ENCODE measurements at regions of chr11 and their contacts with region 1.

Region 1: GRCh38 chr11:57324886-57325734 is at the start of gene TNKS1BP1:
- DNase-seq: peak; percentile 86
- H3K4me3 Mint-ChIP-seq: peak within 1 kb of the TSS; percentile 85
- H3K27ac Mint-ChIP-seq: peak within 1 kb of the TSS; percentile 91
- H3K4me1 Mint-ChIP-seq: peaks cover 57% of the 10 kb centered on the region
- H3K27me3 Mint-ChIP-seq: no peaks in the 10 kb centered on the region
- total RNA-seq, gene TNKS1BP1: 22.1 and 24.3 TPM in 2 replicates

Region 2: GRCh38 chr11:56331861-56332491 is 993.1 kb before region 1 on chr11:
- intact Hi-C with region 1: no loop called
- DNase-seq: no peak
- H3K4me3 Mint-ChIP-seq: no peak overlapping the region
- H3K27ac Mint-ChIP-seq: no peak overlapping the region
- H3K4me1 Mint-ChIP-seq: no peaks in the 10 kb centered on the region
- H3K27me3 Mint-ChIP-seq: no peaks in the 10 kb centered on the region

Region 3: DNA sequence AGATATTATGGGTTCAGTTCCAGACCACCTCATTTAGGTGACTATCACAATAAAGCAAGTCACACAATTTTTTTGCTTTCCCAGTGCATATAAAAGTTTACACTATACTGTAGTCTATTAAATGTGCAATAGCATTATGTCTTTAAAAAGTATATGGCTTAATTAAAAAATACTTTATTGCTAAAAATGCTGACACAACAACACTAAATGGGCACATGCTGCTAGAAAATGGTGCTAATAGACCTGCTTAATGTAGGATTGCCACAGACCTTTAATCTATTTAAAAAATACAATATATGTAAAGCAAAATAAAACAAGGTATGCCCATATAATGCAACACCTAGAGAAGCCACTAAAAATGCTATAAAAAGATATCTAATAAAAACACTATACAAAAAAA is 363.5 kb before region 1 on chr11:
- intact Hi-C with region 1: no loop called
- DNase-seq: no peak
- H3K4me3 Mint-ChIP-seq: no peak overlapping the region
- H3K27ac Mint-ChIP-seq: no peak overlapping the region
- H3K4me1 Mint-ChIP-seq: no peaks in the 10 kb centered on the region
- H3K27me3 Mint-ChIP-seq: no peaks in the 10 kb centered on the region

Region 4: GRCh38 chr11:57311109-57311936 is 13.8 kb before region 1 on chr11:
- intact Hi-C with region 1: loop called (anchors 1 kb)
- DNase-seq: peak; percentile 47
- H3K4me3 Mint-ChIP-seq: peak overlapping the region; percentile 65
- H3K27ac Mint-ChIP-seq: peak overlapping the region; percentile 43
- H3K4me1 Mint-ChIP-seq: peaks cover 5% of the 10 kb centered on the region
- H3K27me3 Mint-ChIP-seq: peaks cover 2% of the 10 kb centered on the region

Region 5: GRCh38 chr11:57335343-57336110 is 10.4 kb after region 1 on chr11 and contains the start of gene SSRP1:
- intact Hi-C with region 1: loop called (anchors 1 kb)
- DNase-seq: peak; percentile 81
- H3K4me3 Mint-ChIP-seq: peak within 1 kb of the TSS; percentile 92
- H3K27ac Mint-ChIP-seq: peak within 1 kb of the TSS; percentile 99
- H3K4me1 Mint-ChIP-seq: peaks cover 39% of the 10 kb centered on the region
- H3K27me3 Mint-ChIP-seq: peaks cover 1% of the 10 kb centered on the region
- total RNA-seq, gene SSRP1: 235 and 239 TPM in 2 replicates

Region 6: DNA sequence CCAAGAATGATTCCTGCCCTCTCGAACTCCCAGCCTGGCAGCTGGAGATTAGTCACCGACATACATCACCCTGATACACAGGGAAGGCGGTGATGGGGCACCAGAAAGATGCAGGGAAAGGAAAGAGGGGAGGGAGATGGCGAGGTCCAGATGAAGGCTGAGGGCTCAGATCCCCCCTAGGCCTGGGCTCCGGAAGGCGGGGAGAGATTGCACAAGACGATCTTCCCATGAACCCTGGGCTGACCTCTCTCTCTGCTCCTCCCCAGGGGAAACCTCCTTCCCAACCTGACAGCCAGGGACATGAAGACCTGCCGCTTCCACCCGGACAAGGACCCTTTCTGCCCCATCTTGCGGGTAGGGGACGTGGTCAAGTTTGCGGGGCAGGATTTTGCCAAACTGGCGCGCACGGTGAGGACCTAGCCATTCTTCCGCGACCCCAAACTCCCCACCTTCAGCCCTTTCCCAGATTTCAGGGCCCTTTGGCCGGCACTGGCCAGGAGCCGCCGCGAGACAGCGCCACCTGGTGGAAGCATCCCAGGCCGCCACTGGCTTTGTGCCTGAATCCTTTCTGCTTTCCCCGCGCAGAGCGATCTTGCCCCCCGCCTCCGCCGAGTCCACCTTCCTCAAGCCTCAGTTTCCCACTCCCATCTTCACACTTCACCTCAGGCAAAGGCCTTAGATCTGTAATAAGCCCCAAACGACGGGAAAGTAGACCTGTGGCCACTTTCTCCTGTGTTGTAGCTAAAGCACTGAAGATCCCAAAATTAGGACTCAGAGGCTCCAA is 24.6 kb after region 1 on chr11:
- intact Hi-C with region 1: no loop called
- DNase-seq: peak; percentile 37
- H3K4me3 Mint-ChIP-seq: no peak overlapping the region
- H3K27ac Mint-ChIP-seq: no peak overlapping the region
- H3K4me1 Mint-ChIP-seq: peaks cover 13% of the 10 kb centered on the region
- H3K27me3 Mint-ChIP-seq: peaks cover 14% of the 10 kb centered on the region

Region 7: DNA sequence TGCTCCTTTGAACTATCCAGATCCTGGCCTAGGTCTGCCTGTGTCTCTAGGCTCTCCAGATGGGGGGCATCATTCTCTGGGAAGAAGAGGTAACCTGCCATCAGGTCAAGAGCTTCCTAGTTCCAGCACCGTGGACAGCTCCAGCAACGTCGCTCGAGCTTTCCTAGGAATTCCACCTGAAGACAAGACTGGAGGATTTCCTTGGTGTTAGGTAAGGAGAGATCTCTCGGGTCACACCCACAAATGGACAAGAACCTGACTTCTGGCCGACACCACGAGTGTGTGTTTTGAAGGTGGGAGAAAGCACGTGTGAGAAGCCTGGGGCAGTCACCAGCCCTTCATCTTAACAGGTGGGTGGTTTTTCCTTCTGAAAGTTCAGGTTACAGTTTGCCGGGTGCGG is 54.6 kb after region 1 on chr11:
- intact Hi-C with region 1: no loop called
- DNase-seq: no peak
- H3K4me3 Mint-ChIP-seq: no peak overlapping the region
- H3K27ac Mint-ChIP-seq: no peak overlapping the region
- H3K4me1 Mint-ChIP-seq: no peaks in the 10 kb centered on the region
- H3K27me3 Mint-ChIP-seq: peaks cover 5% of the 10 kb centered on the region

Measured in activated T-helper 1 cell treated with anti-CD3 and anti-CD28 coated beads, Interleukin-12 subunit alpha, Interleukin-12 subunit beta, Interleukin-2, Interleukin-4 antibody, amounts not matched to agents 30 ng/mL and 10 ng/mL and 1 ng/mL, durations not matched to agents 14 hours and 24 hours and 36 hours (primary cell).